OCI-LY7 (cell line): ENCODE measurements at regions of chr1 and their contacts with region 1.

Region 1: GRCh38 chr1:182962554-182963115 is 9.7 kb upstream of the SHCBP1L start:
- DNase-seq: peak; percentile 81
- H3K4me3 ChIP-seq: no peak overlapping the region
- H3K27ac ChIP-seq: no peak overlapping the region
- H3K4me1 ChIP-seq: peaks cover 5% of the 10 kb centered on the region
- CTCF ChIP-seq: peak; percentile 99

Region 2: GRCh38 chr1:182778862-182779261 is 183.8 kb before region 1 on chr1:
- CTCF ChIA-PET with region 1: no interaction called
- POLR2A ChIA-PET with region 1: no interaction called
- intact Hi-C with region 1: no loop called
- DNase-seq: no peak
- H3K4me3 ChIP-seq: no peak overlapping the region
- H3K27ac ChIP-seq: no peak overlapping the region
- H3K4me1 ChIP-seq: peaks cover 31% of the 10 kb centered on the region
- CTCF ChIP-seq: no peak

Region 3: DNA sequence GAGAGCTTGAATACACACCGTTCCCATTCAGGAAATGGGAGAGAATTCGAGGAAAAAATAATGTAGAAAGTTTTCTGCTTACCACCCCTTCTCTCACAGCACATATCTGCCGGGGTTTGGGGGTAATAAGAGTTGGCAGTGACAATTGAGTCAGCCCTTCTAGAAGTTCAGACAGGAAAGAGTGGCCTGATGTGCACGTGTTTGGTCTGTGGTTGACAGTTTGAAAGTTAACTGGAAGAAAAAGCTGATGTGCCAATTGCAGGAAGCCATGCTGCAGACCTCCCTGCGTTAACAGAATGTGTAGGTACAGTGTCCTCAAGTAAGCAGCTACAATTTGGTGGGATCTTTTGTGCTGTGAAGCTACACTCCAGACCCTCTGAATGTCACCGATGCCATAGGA is 72.6 kb before region 1 on chr1:
- CTCF ChIA-PET with region 1: no interaction called
- POLR2A ChIA-PET with region 1: no interaction called
- intact Hi-C with region 1: no loop called
- DNase-seq: peak; percentile 7
- H3K4me3 ChIP-seq: no peak overlapping the region
- H3K27ac ChIP-seq: no peak overlapping the region
- H3K4me1 ChIP-seq: no peaks in the 10 kb centered on the region
- CTCF ChIP-seq: no peak

Region 4: DNA sequence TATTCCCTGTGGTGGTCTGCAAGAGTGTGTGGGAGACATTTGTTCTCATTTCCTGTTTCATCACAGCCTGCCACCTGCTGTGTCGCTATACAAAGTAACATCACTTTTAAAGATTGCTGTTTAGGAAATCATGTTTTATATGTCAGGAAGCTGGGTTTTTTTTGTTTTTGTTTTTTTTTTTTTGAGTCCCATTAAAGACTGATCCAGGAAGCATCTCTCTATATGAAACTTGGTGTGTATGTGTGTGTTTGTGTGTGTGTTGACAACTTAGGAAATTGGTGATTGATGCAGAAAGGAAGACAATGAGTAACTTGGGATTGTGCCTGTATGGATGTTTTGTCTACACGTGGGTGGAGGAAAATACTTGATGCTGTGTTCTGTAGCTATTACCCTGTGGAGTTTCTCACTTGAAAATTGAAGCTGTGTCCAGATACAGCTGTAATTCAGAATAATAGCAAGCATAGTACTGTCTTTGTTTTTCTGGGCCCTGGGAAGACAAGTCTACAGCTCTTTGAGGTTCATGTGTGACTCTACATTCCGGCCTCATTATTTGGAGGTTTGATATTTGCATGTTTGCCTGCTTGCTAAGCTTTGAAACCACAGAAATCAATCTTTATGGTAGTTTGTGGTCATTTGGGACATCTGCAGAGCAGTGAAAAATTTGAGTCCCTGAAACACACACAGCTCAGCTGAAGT is 108.4 kb after region 1 on chr1:
- CTCF ChIA-PET with region 1: interaction called, 4 read pairs
- POLR2A ChIA-PET with region 1: interaction called, 3 read pairs
- intact Hi-C with region 1: loop called (anchors 1 kb)
- DNase-seq: peak; percentile 75
- H3K4me3 ChIP-seq: peak overlapping the region; percentile 53
- H3K27ac ChIP-seq: peak overlapping the region; percentile 46
- H3K4me1 ChIP-seq: peaks cover 41% of the 10 kb centered on the region
- CTCF ChIP-seq: peak; percentile 38; the same call in 1 of the 2 replicates

Region 5: GRCh38 chr1:183144752-183145151 is 182.1 kb after region 1 on chr1:
- CTCF ChIA-PET with region 1: no interaction called
- POLR2A ChIA-PET with region 1: no interaction called
- intact Hi-C with region 1: loop called (anchors 5 kb)
- DNase-seq: no peak
- H3K4me3 ChIP-seq: no peak overlapping the region
- H3K27ac ChIP-seq: no peak overlapping the region
- H3K4me1 ChIP-seq: no peaks in the 10 kb centered on the region
- CTCF ChIP-seq: no peak

Region 6: DNA sequence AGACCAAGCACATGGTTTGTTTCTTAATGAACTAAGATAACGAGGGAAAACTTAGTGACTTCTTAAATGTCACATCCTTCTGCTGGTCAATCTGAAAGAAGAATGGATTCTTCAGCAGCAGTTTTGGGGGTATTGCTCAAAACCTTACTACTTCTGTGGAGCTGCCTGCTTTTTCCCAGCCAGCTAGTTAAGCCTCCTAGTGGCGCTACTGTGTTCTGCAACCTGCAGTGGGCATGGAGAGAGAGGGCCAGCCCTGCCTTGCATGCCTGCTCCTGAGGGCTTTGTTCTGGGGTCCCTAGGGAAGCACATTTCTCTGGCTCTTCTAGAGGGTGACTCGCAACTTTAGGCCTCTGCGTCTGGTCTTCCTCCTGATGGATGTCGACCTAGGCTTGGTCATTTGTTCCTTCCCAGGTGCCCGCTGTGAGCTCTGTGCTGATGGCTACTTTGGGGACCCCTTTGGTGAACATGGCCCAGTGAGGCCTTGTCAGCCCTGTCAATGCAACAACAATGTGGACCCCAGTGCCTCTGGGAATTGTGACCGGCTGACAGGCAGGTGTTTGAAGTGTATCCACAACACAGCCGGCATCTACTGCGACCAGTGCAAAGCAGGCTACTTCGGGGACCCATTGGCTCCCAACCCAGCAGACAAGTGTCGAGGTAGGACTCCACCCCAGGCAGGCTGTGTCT is 265.5 kb after region 1 on chr1:
- CTCF ChIA-PET with region 1: interaction called, 7 read pairs
- POLR2A ChIA-PET with region 1: interaction called, 4 read pairs
- intact Hi-C with region 1: loop called (anchors 1 kb)
- DNase-seq: peak; percentile 52
- H3K4me3 ChIP-seq: no peak overlapping the region
- H3K27ac ChIP-seq: no peak overlapping the region
- H3K4me1 ChIP-seq: no peaks in the 10 kb centered on the region
- CTCF ChIP-seq: peak; percentile 81

Region 7: GRCh38 chr1:183622884-183623785 is 660.5 kb after region 1 on chr1:
- CTCF ChIA-PET with region 1: no interaction called
- POLR2A ChIA-PET with region 1: no interaction called
- intact Hi-C with region 1: loop called (anchors 5 kb)
- DNase-seq: peak; percentile 82
- H3K4me3 ChIP-seq: no peak overlapping the region
- H3K27ac ChIP-seq: no peak overlapping the region
- H3K4me1 ChIP-seq: peaks cover 24% of the 10 kb centered on the region
- CTCF ChIP-seq: peak; percentile 97